OCI-LY7 (cell line): ENCODE measurements at regions of chr3 and their contacts with region 1.

Region 1: DNA sequence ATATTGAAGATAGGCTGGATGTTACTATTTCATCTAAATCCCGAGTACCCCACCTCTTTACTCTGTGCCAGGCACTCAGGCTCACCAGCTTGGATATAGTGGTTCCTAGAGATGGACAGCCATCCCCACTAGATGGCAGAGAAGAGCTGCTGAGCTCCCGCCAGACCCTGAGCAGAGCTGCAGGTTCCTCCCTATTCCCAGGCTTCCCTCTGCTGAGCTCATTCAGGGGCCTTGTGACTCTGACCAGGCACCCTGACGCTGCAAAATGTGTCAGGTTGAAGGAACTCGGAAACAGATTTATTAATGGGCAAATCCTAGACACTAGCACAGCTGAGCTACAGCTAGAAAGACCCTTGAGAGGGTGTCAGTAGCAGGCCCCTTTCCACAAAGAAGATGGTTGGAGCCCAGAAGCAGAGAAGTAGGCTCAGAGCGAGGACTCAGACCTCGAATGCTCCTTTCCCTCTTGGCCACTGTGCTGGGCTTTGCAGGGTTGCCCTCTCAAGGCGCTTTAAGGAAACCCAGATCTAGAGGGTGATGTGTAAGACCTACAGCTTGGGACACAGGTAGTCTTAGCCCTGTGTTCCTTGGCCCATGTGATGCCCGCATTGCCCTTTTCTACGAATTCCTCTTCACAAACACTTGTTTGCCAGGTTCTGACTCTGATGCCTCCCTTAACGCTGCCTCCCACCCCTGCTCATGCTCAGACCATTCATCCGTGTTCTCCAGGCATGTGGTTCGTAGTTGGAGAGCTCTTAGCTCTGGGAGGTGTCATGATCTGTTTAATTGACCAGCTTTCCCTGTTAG is 38.0 kb upstream of the RHO start:
- DNase-seq: peak; percentile 76
- H3K4me3 ChIP-seq: no peak overlapping the region
- H3K27ac ChIP-seq: no peak overlapping the region
- H3K4me1 ChIP-seq: no peaks in the 10 kb centered on the region
- CTCF ChIP-seq: peak; percentile 95

Region 2: DNA sequence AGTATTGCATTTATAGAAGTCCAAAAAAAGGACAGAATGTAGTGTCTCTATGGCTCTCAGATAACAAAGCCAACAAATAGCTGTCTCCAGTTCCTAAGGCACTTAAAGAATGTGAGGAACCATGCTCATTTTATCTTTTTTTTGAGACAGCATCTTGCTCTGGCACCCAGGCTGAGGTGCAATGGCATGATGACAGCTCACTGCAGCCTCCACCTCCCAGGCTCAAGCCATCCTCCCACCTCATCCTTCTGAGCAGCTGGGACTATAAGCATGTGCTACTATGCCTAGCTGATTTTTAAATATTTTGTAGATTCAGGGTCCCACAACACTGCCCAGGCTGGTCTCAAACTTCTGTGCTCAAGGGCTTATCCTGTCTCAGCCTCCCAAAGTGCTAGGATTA is 345.7 kb before region 1 on chr3:
- CTCF ChIA-PET with region 1: no interaction called
- POLR2A ChIA-PET with region 1: no interaction called
- intact Hi-C with region 1: no loop called
- DNase-seq: no peak
- H3K4me3 ChIP-seq: no peak overlapping the region
- H3K27ac ChIP-seq: no peak overlapping the region
- H3K4me1 ChIP-seq: no peaks in the 10 kb centered on the region
- CTCF ChIP-seq: no peak

Region 3: GRCh38 chr3:129383292-129383860 is 107.1 kb before region 1 on chr3:
- CTCF ChIA-PET with region 1: interaction called, 4 read pairs
- POLR2A ChIA-PET with region 1: interaction called, 4 read pairs
- intact Hi-C with region 1: loop called (anchors 2 kb)
- DNase-seq: peak; percentile 82
- H3K4me3 ChIP-seq: no peak overlapping the region
- H3K27ac ChIP-seq: no peak overlapping the region
- H3K4me1 ChIP-seq: no peaks in the 10 kb centered on the region
- CTCF ChIP-seq: peak; percentile 93

Region 4: GRCh38 chr3:129608087-129608935 is 117.9 kb after region 1 on chr3:
- CTCF ChIA-PET with region 1: interaction called, 4 read pairs
- POLR2A ChIA-PET with region 1: no interaction called
- intact Hi-C with region 1: loop called (anchors 1 kb)
- DNase-seq: peak; percentile 58
- H3K4me3 ChIP-seq: no peak overlapping the region
- H3K27ac ChIP-seq: no peak overlapping the region
- H3K4me1 ChIP-seq: no peaks in the 10 kb centered on the region
- CTCF ChIP-seq: peak; percentile 68

Region 5: GRCh38 chr3:129627429-129628168 is 137.2 kb after region 1 on chr3:
- CTCF ChIA-PET with region 1: interaction called, 3 read pairs
- POLR2A ChIA-PET with region 1: no interaction called
- intact Hi-C with region 1: loop called (anchors 1 kb)
- DNase-seq: peak; percentile 69
- H3K4me3 ChIP-seq: no peak overlapping the region
- H3K27ac ChIP-seq: no peak overlapping the region
- H3K4me1 ChIP-seq: peaks cover 13% of the 10 kb centered on the region
- CTCF ChIP-seq: peak; percentile 88

Region 6: GRCh38 chr3:129934234-129935123 is 444.0 kb after region 1 on chr3:
- CTCF ChIA-PET with region 1: interaction called, 5 read pairs
- POLR2A ChIA-PET with region 1: no interaction called
- intact Hi-C with region 1: loop called (anchors 1 kb)
- DNase-seq: peak; percentile 41
- H3K4me3 ChIP-seq: no peak overlapping the region
- H3K27ac ChIP-seq: no peak overlapping the region
- H3K4me1 ChIP-seq: no peaks in the 10 kb centered on the region
- CTCF ChIP-seq: peak; percentile 99

Region 7: DNA sequence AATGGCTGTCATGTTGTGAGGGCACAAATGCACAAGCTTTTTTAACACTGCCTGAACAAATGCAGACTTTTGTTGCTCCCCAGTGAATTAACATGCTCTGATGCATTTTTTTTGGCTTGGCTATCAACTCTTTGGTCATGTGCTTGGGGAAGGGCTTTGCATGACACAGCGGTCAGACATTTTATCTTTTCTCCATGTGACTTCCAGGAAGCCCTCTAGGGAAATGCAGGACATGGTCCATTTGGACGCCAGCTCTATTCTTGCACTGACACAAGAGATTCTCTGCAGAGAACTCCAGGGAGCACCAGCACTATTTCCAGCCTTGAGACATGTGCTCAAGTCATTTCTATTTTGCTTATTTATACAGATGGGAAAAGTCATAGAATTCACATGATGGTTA is 1582.4 kb after region 1 on chr3:
- CTCF ChIA-PET with region 1: no interaction called
- POLR2A ChIA-PET with region 1: no interaction called
- intact Hi-C with region 1: no loop called
- DNase-seq: no peak
- H3K4me3 ChIP-seq: no peak overlapping the region
- H3K27ac ChIP-seq: no peak overlapping the region
- H3K4me1 ChIP-seq: no peaks in the 10 kb centered on the region
- CTCF ChIP-seq: no peak